ENCODE measurements at regions of chr3 and their contacts with region 1.

Region 1: GRCh38 chr3:181176601-181177000 is 187.1 kb upstream of the DNAJC19 start:
- DNase-seq: peak; percentile 66
- ATAC-seq: no peak
- H3K4me3 Mint-ChIP-seq: no peak overlapping the region
- H3K27ac Mint-ChIP-seq: no peak overlapping the region
- H3K4me1 Mint-ChIP-seq: no peaks in the 10 kb centered on the region
- H3K27me3 Mint-ChIP-seq: no peaks in the 10 kb centered on the region

Region 2: GRCh38 chr3:180802837-180803236 is 373.8 kb before region 1 on chr3:
- CTCF ChIA-PET with region 1: no interaction called
- POLR2A ChIA-PET with region 1: no interaction called
- intact Hi-C with region 1: loop called (anchors 5 to 10 kb)
- DNase-seq: no peak
- ATAC-seq: no peak
- H3K4me3 Mint-ChIP-seq: no peak overlapping the region
- H3K27ac Mint-ChIP-seq: no peak overlapping the region
- H3K4me1 Mint-ChIP-seq: no peaks in the 10 kb centered on the region
- H3K27me3 Mint-ChIP-seq: peaks cover 2% of the 10 kb centered on the region

Region 3: DNA sequence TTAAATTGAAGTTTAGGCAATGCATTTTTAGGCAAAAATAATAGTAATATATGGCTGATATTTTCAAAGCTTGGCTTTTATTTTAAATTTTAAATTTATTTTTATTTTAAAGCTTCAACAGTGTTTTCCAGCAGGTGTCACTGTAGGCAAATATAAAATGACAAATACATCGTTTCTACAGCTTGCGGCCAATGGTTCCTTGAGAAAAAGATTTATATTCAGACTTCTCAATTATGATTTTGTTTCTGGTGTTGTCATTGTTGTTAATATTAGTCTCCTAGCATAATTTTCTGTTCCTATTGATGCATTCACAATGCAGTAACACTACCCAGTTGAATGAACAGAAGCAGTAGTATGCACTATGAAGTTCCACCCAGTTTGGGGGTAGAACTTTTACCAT is 33.7 kb after region 1 on chr3:
- CTCF ChIA-PET with region 1: no interaction called
- POLR2A ChIA-PET with region 1: no interaction called
- intact Hi-C with region 1: no loop called
- DNase-seq: no peak
- ATAC-seq: no peak
- H3K4me3 Mint-ChIP-seq: no peak overlapping the region
- H3K27ac Mint-ChIP-seq: no peak overlapping the region
- H3K4me1 Mint-ChIP-seq: no peaks in the 10 kb centered on the region
- H3K27me3 Mint-ChIP-seq: peaks cover 2% of the 10 kb centered on the region

Measured in activated CD4-positive, alpha-beta T cell treated with anti-CD3 and anti-CD28 coated beads for 36 hours (primary cell).